ENCODE measurements at regions of chr22 and their contacts with region 1.

Region 1: DNA sequence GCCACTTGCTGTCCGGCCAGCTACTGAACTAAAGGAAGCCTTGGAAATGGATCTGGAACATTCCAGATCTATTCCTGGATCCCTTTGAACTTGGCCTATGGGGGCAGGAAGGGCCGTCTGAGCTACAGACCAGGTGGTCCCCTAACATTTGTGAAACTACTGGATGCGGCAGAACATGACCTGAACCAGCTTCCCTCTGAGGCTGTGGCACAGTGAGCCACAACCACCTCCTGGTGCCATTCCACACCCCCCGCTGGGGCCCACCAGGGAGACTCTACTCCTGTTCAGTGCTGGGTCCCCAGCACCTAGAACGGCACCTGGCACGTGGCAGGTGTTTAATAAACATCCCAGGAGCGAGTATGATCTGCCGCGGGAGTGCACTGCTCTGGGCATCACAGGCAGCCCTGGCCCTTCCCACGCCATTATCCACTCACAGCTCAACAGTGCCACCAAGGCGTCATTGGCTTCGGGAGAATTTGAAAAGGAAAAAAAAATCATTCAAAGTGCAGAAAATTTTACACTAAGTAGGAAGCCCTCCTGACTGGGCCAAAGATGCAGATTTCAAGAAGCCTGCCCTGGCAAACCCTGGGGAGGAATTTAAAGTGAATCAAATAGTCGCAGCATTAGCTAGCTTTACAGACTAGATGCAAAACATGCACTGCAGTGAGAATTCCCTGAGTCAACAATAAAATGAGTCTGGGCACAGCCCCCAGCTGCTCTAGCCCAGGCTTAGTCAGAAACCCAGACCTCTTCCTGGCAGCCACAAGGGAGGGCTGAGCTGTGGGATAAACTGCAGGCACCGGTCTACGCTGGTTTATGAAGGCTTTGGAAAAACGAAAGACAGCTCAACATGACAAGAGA is 14.3 kb upstream of the EFCAB6 start:
- DNase-seq: no peak
- H3K4me3 ChIP-seq: no peak overlapping the region; a peak in 1 of 4 replicates
- H3K27ac ChIP-seq: peak overlapping the region; percentile 53 to 72
- H3K4me1 ChIP-seq: peaks cover 0 to 36% of the 10 kb centered on the region in 2 experiments; a peak in 2 of 4 replicates
- H3K27me3 ChIP-seq: no peaks in the 10 kb centered on the region
- CTCF ChIP-seq: peak; percentile 53
- EP300 ChIP-seq: no peak
- RAD21 ChIP-seq: peak; percentile 53

Region 2: GRCh38 chr22:43789452-43789851 is 36.9 kb before region 1 on chr22:
- CTCF ChIA-PET with region 1: no interaction called
- POLR2A ChIA-PET with region 1: no interaction called
- DNase-seq: peak; percentile 65
- H3K4me3 ChIP-seq: no peak overlapping the region
- H3K27ac ChIP-seq: peak overlapping the region; percentile 32 to 74; a peak in 3 of 4 replicates
- H3K4me1 ChIP-seq: peaks cover 0 to 3% of the 10 kb centered on the region in 2 experiments; a peak in 1 of 4 replicates
- H3K27me3 ChIP-seq: no peaks in the 10 kb centered on the region
- CTCF ChIP-seq: no peak
- EP300 ChIP-seq: peak; percentile 77 to 85; a peak in 3 of 4 replicates
- RAD21 ChIP-seq: 0 out of 2 replicates have a peak, but pooled peaks have one; percentile 2

Region 3: DNA sequence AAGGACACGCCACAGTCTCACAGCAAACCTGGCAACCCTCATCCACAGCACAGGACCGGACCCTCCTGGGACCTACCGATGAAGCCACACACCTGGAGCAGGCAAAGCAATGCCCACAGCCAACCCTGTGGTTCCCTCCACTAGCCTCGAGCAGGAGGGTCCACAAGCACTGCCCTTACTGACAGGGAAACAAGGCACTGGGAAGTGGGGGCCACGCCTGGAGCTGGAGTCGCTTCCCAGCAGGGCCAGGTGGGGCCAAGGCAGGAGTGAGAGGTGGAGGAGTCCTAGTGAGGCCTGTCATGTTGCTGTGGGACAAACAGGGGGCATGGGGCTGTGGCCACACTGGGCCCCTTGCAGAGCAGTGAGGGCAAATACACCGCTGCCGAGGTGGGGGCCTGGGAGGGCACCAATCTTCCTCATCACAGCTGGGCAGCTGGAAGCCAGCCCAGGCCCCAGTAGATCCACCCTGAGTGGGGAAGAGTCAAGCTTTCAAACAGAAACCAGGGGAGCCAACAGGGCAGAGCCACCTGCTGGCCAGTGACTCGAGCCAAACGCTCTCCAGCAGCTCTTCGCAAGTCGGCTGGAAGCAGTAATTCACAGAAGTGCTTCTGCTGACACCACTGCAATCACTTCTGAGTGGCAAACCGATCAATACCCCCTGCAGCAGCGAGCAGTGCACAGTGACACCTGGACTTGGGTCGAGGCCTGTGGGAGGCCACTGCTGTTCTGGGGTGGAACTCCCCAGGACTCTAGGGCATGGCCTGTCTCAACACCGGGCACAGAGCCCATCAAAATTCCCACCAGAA is 22.2 kb after region 1 on chr22:
- CTCF ChIA-PET with region 1: interaction called, 15 read pairs
- POLR2A ChIA-PET with region 1: interaction called, 3 read pairs
- DNase-seq: peak; percentile 56
- H3K4me3 ChIP-seq: no peak overlapping the region
- H3K27ac ChIP-seq: no peak overlapping the region
- H3K4me1 ChIP-seq: peaks cover 0 to 34% of the 10 kb centered on the region in 2 experiments; a peak in 1 of 4 replicates
- H3K27me3 ChIP-seq: no peaks in the 10 kb centered on the region
- CTCF ChIP-seq: peak; percentile 33; the same call in 1 of the 2 replicates
- EP300 ChIP-seq: no peak
- RAD21 ChIP-seq: peak; percentile 45

Region 4: DNA sequence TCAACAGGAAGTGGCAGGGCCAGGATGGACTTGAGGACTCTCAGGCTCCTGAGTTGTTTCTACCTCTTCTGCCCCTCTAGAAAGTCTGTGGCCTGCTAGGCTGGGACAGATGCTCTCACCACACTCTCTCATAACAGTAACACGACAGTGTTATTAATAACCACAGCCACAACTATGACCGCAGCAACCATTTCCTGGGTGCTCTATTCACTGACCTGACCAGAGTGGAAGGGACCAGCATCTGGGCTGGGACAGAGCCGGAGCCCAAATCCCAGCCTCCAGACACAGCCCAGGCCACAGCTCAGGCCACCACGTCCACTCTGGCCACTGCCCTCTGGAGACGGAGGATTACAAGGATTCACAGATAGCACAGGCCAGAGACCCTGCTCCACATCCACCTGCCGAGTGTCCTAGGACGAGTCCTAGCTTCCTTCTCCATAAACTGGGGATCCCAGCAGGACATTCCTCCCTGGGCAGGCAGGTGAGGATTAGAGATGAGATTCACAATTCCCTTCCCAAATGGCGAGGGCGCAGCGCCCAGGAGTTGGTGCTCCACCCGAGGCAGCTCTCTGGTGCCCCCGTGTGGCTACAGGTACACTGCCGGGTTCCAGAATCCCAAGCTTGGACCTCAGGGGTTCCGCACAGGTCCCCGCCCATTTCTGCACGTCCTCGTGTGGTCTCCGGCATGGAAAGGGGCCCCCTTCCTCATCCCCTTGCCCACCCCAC is 58.4 kb after region 1 on chr22:
- CTCF ChIA-PET with region 1: interaction called, 17 read pairs
- POLR2A ChIA-PET with region 1: no interaction called
- DNase-seq: peak; percentile 75
- H3K4me3 ChIP-seq: no peak overlapping the region; a peak in 1 of 4 replicates
- H3K27ac ChIP-seq: no peak overlapping the region
- H3K4me1 ChIP-seq: no peaks in the 10 kb centered on the region
- H3K27me3 ChIP-seq: no peaks in the 10 kb centered on the region; the same call in 1 of the 2 replicates
- CTCF ChIP-seq: peak; percentile 62
- EP300 ChIP-seq: no peak
- RAD21 ChIP-seq: peak; percentile 63